A549 (cell line): ENCODE measurements at regions of chr9 and their contacts with region 1.

Region 1: GRCh38 chr9:78439190-78439865 is 142.4 kb downstream of the PSAT1 start:
- DNase-seq: peak; percentile 69 to 87
- ATAC-seq: peak; percentile 91 to 92
- H3K4me3 ChIP-seq: no peak overlapping the region
- H3K27ac ChIP-seq: peak overlapping the region; percentile 24 to 65; a peak in 3 of 6 replicates
- H3K4me1 ChIP-seq: peaks cover 11% of the 10 kb centered on the region; the same call in 2 of the 3 replicates
- CTCF ChIP-seq: peak; percentile 92
- EP300 ChIP-seq: no peak
- POLR2A ChIP-seq: no peak
- RAD21 ChIP-seq: peak; percentile 97

Region 2: DNA sequence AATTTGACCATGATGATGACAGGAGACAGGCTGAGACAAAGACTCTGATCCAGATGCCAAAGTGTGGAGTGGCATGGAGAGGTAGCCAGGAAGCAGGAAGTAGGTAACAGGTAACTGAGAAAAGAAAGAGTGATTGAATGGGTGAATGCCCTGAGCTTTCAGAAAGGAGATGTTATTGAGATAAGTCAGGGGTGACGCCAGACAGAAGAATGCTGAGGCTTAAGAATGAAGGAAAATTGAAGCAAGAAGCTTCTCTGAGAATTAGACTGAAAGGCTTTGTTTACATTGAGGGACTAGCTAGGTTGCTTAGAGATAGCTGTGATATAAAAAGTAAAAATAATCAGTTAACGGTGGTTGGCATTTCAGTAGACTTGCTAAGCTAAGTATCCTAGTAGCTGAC is 23.3 kb after region 1 on chr9:
- CTCF ChIA-PET with region 1: interaction called, 11 read pairs
- POLR2A ChIA-PET with region 1: no interaction called
- DNase-seq: no peak
- ATAC-seq: no peak
- H3K4me3 ChIP-seq: no peak overlapping the region
- H3K27ac ChIP-seq: no peak overlapping the region
- H3K4me1 ChIP-seq: no peaks in the 10 kb centered on the region
- CTCF ChIP-seq: no peak
- EP300 ChIP-seq: no peak
- POLR2A ChIP-seq: no peak
- RAD21 ChIP-seq: no peak